AG04449 (cell line): ENCODE measurements at regions of chr15 and their contacts with region 1.

Region 1: DNA sequence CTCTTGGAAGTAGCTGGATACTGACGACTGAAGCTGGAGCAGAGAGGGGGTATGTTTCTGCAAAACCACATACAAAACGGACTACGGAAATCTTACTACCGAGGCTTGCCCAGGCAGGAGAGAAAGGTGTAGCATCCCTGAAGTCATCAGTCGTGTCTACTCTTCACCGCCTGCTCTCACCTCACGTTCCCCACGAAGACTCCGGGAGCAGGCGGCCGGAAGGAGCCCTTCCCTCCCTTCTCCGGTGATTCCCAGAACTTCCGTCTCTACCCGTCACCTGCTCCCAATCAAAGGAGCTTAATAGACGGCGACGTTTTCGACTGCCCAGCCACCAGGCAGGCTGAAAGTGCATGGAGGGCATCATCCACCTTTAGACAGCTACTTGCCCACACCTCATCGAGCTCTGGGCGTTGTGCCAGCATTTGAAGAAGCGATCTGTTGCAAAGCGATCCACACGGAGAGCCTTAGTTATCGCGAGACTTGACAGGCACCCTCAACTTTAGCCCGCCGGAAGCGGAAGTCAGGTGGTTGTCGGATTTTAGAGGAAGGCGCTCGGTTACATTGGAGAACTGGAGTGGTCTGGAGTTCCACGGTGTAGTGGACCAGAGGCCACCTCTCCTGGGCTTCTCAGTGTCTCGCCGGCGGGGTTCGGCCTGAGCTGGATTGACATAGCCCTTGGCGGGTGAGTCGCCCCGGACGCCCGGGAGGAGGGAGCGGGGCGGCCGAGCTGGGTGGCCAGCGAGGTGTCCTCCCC is at the start of gene RAMAC:
- DNase-seq: peak; percentile 67
- H3K4me3 ChIP-seq: peak within 1 kb of the TSS; percentile 99
- CTCF ChIP-seq: no peak

Region 2: DNA sequence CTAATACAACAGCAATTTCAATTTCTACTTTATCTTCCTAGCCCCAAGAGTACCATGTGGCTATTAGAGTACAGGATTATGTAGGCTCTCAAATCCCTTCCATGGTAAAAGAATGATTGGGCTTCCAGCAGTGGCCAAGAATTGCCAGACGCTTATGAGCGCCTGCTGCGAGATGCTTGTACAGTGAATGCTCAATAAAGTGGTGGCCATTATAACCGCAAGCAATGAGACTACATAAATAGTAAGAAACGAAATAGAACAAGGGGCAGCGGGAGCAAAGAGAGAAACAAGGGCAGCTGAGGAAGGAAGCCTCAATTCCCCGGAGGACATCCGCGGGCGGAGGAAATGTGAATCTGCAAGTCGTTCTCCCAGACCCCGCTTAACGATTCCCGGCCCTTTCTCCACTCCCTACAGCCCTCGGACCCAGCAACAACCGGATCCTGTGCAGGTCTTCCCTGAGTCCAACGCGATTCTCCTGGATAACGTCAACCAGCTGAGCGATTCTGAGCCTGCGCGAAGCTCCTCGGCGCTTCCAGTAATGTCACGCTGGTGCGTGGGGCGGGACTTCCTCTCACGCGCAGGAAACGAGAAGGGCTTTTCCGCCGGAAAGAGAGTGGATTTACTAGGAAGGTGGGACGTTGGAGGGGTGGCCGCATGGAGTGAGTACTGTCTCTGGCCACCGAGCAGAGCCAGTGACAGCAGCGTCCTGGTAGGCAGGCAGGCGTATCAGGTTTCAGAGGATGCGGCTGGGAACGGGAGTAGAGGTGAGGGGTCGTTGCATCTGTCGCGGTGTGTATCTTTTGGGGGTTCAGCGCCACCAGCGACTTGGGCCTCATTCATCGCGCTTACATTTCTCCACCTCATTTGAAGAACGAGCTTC is 235.7 kb before region 1 on chr15:
- CTCF ChIA-PET with region 1: no interaction called
- POLR2A ChIA-PET with region 1: interaction called, 11 read pairs
- DNase-seq: peak; percentile 65
- H3K4me3 ChIP-seq: peak overlapping the region; percentile 92
- CTCF ChIP-seq: no peak